ENCODE measurements at regions of chr5 and their contacts with region 1.

Region 1: DNA sequence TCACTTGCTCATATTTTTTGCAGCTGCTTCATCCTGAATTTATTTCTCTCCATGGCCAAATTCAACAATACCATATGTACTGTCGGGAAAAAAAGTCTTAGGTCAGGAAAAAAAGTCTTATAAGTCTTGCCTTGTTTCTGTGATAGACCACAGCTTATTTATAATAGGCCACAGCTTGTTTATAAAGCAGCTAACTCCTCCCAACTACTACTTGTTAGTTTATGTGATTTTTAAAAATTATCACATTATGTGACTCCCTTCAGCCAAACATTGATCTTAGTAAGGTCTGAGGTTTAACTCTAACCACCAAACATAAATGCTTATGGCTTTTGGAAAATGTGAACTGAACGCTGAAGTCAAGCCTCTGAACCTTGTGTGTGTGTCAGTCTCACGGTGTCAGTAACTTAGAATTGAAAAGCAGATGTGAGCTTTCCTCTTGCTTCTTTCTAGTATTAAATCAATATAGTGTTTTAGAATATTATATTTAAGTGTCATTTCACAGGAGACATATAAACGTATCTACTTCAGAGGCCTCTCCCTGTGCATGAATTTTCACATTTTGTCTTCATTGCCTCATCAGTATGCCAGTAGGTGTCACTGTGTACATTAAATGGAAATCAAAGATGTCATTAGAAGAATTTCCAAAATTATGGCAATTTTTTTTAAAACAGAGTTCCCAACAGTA is 51.3 kb downstream of the SNX24 start:
- DNase-seq: no peak
- ATAC-seq: 0 out of 3 replicates have a peak, but pooled peaks have one; percentile 33
- H3K4me3 ChIP-seq: no peak overlapping the region
- H3K27ac ChIP-seq: no peak overlapping the region
- H3K4me1 ChIP-seq: no peaks in the 10 kb centered on the region
- H3K27me3 ChIP-seq: no peaks in the 10 kb centered on the region
- CTCF ChIP-seq: peak; percentile 30 to 49 (median 48); a peak in 5 of 6 replicates
- EP300 ChIP-seq: no peak
- POLR2A ChIP-seq: no peak
- RAD21 ChIP-seq: peak; percentile 70

Region 2: DNA sequence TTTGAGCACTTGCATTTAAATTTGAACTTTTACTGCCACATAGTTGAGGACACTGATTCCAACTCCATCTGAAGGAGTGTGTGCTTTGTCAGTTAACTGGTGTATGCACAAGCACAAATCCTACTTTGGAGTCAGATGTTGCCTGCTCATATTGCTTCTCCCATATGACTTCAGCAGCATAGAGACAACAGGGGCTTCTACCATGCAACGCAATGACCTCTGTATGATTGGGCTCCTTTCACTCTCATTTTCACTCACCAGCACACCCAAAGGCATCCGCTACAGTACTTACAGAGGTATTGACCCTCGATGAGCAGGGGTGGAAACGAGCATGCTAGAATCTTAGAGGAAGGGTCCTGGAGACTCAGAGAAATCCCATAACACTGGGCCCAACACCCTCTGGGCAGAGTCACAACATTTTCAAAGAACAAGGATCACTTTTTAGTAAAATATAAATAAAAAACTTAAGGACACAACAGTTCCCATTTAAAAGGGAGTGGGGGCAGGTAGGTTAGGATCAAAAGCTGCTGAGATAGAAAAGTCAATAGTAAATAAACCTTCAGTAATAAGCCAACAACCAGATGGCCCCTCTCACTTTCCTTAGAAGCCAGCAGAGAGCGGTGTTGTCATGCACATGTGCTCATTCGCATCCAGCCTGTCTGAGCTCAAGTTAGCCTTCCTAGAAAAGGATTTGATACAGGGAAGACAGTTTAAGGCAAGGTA is 380.9 kb before region 1 on chr5:
- CTCF ChIA-PET with region 1: interaction called, 4 read pairs
- POLR2A ChIA-PET with region 1: no interaction called
- RAD21 ChIA-PET with region 1: no interaction called
- SMC1A ChIA-PET with region 1: interaction called, 3 read pairs
- in situ Hi-C with region 1: no loop called
- intact Hi-C with region 1: loop called (anchors 5 kb)
- DNase-seq: no peak
- ATAC-seq: peak; percentile 88
- H3K4me3 ChIP-seq: no peak overlapping the region
- H3K27ac ChIP-seq: no peak overlapping the region
- H3K4me1 ChIP-seq: no peaks in the 10 kb centered on the region
- H3K27me3 ChIP-seq: no peaks in the 10 kb centered on the region
- CTCF ChIP-seq: peak; percentile 67 to 78 (median 74); a peak in 5 of 6 replicates
- EP300 ChIP-seq: no peak
- POLR2A ChIP-seq: no peak
- RAD21 ChIP-seq: peak; percentile 97

Region 3: GRCh38 chr5:122907238-122907637 is 10.5 kb after region 1 on chr5:
- CTCF ChIA-PET with region 1: no interaction called
- POLR2A ChIA-PET with region 1: no interaction called
- RAD21 ChIA-PET with region 1: no interaction called
- SMC1A ChIA-PET with region 1: no interaction called
- in situ Hi-C with region 1: no loop called
- intact Hi-C with region 1: no loop called
- DNase-seq: no peak
- ATAC-seq: no peak
- H3K4me3 ChIP-seq: no peak overlapping the region
- H3K27ac ChIP-seq: no peak overlapping the region
- H3K4me1 ChIP-seq: no peaks in the 10 kb centered on the region
- H3K27me3 ChIP-seq: no peaks in the 10 kb centered on the region
- CTCF ChIP-seq: no peak
- EP300 ChIP-seq: no peak
- POLR2A ChIP-seq: no peak
- RAD21 ChIP-seq: no peak

Region 4: GRCh38 chr5:123344816-123345426 is 448.2 kb after region 1 on chr5:
- CTCF ChIA-PET with region 1: no interaction called
- POLR2A ChIA-PET with region 1: no interaction called
- RAD21 ChIA-PET with region 1: no interaction called
- SMC1A ChIA-PET with region 1: no interaction called
- in situ Hi-C with region 1: no loop called
- intact Hi-C with region 1: loop called (anchors 2 kb)
- DNase-seq: no peak
- ATAC-seq: peak; percentile 53; the same call in 2 of the 3 replicates
- H3K4me3 ChIP-seq: no peak overlapping the region
- H3K27ac ChIP-seq: no peak overlapping the region
- H3K4me1 ChIP-seq: no peaks in the 10 kb centered on the region
- H3K27me3 ChIP-seq: no peaks in the 10 kb centered on the region
- CTCF ChIP-seq: peak; percentile 38 to 55 (median 46); a peak in 5 of 6 replicates
- EP300 ChIP-seq: no peak
- POLR2A ChIP-seq: no peak
- RAD21 ChIP-seq: peak; percentile 38